ENCODE measurements at regions of chr7 and their contacts with region 1.

Region 1: GRCh38 chr7:31443457-31443856 is 70.4 kb upstream of the ITPRID1 start:
- DNase-seq: peak; percentile 47
- H3K4me3 Mint-ChIP-seq: peak overlapping the region; percentile 27
- H3K27ac Mint-ChIP-seq: peak overlapping the region; percentile 7
- H3K4me1 Mint-ChIP-seq: peaks cover 43% of the 10 kb centered on the region
- H3K27me3 Mint-ChIP-seq: no peaks in the 10 kb centered on the region
- CTCF ChIP-seq: peak; percentile 81

Region 2: DNA sequence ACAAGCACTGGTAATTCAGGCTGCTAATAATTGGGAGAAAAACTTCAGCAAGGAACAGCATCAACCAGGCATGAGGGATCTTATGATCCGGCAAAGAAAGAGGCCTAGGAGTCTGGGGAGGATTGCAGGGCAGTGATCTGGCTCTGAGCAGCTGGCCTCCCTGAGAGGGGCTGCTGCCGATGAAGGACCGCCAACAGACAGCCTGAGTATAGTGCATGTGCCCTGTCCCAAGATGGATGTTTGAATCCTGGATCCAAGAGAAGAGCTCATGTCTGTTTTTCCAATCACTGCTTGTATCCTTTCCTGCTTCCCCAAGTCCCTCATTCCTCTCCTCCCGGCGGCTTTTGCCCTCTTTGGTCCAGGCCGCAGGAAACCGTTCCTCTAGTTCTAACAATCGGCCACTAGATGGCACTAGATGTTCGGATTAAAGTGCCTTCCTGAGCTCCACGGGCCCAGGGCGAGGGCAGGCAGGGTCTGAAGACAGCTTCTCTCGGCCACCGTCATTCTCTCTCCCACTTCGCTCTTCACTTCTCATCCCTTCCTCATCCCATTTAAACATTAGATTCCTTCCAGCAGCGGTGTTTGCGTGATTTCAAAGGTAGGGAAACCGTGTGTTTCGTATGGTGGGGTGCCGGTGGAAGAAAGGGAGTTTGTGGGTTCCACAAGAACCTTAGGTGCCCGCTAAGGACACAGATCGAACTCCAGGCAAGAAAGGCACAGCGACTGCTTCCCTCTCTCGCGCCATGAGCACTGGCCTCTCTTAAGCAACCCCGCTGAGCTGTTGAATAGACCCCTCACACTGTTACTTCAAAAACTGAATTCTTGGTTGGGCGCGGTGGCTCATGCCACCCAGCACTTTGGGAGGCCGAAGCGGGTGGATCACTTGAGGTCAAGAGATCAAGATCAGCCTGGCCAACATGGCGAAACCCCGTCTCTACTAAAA is 308.9 kb before region 1 on chr7:
- CTCF ChIA-PET with region 1: interaction called, 14 read pairs
- intact Hi-C with region 1: loop called (anchors 5 kb)
- DNase-seq: peak; percentile 87
- H3K4me3 Mint-ChIP-seq: no peak overlapping the region
- H3K27ac Mint-ChIP-seq: no peak overlapping the region
- H3K4me1 Mint-ChIP-seq: no peaks in the 10 kb centered on the region
- H3K27me3 Mint-ChIP-seq: peaks cover 50% of the 10 kb centered on the region
- CTCF ChIP-seq: peak; percentile 92

Region 3: GRCh38 chr7:31373337-31374289 is 69.8 kb before region 1 on chr7:
- CTCF ChIA-PET with region 1: interaction called, 40 read pairs
- intact Hi-C with region 1: loop called (anchors 1 kb)
- DNase-seq: peak; percentile 84
- H3K4me3 Mint-ChIP-seq: no peak overlapping the region
- H3K27ac Mint-ChIP-seq: no peak overlapping the region
- H3K4me1 Mint-ChIP-seq: peaks cover 10% of the 10 kb centered on the region
- H3K27me3 Mint-ChIP-seq: no peaks in the 10 kb centered on the region
- CTCF ChIP-seq: peak; percentile 83

Region 4: DNA sequence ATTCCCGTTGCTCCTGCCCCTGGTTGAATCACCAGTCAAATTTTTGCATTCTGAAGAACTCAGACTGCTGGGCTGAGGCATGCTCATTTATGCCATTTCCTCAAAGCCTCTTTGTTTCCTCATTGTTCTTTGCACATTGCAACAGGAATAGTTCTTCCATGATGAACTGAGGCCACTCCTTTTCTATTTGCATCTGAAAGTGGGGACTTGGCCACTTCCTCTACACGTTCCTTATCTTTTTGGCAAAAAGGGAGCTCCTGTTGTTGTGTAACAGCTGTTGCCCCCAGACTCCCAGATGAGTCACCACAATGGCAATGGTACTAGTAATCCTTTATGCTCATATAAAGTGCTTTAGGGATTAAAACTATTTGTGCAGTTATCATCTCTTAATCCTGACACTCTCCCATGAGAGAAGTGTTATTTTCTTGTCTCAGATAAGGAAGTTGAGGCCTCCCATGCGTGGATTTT is 50.3 kb after region 1 on chr7:
- CTCF ChIA-PET with region 1: interaction called, 21 read pairs
- intact Hi-C with region 1: loop called (anchors 1 kb)
- DNase-seq: peak; percentile 87
- H3K4me3 Mint-ChIP-seq: peak overlapping the region; percentile 16
- H3K27ac Mint-ChIP-seq: peak overlapping the region; percentile 95
- H3K4me1 Mint-ChIP-seq: peaks cover 78% of the 10 kb centered on the region
- H3K27me3 Mint-ChIP-seq: no peaks in the 10 kb centered on the region
- CTCF ChIP-seq: no peak

Region 5: GRCh38 chr7:31508823-31509222 is 65.4 kb after region 1 on chr7:
- CTCF ChIA-PET with region 1: no interaction called
- intact Hi-C with region 1: no loop called
- DNase-seq: no peak
- H3K4me3 Mint-ChIP-seq: no peak overlapping the region
- H3K27ac Mint-ChIP-seq: no peak overlapping the region
- H3K4me1 Mint-ChIP-seq: peaks cover 3% of the 10 kb centered on the region
- H3K27me3 Mint-ChIP-seq: no peaks in the 10 kb centered on the region
- CTCF ChIP-seq: no peak

Region 6: GRCh38 chr7:31633894-31634494 is 190.5 kb after region 1 on chr7:
- CTCF ChIA-PET with region 1: interaction called, 149 read pairs
- intact Hi-C with region 1: loop called (anchors 1 kb)
- DNase-seq: peak; percentile 83
- H3K4me3 Mint-ChIP-seq: no peak overlapping the region
- H3K27ac Mint-ChIP-seq: peak overlapping the region; percentile 44
- H3K4me1 Mint-ChIP-seq: peaks cover 28% of the 10 kb centered on the region
- H3K27me3 Mint-ChIP-seq: no peaks in the 10 kb centered on the region
- CTCF ChIP-seq: peak; percentile 92

Measured in Calu3 (cell line).